ENCODE measurements at regions of chr19 and their contacts with region 1.

Region 1: GRCh38 chr19:39341719-39342604 is at the start of gene SAMD4B:
- DNase-seq: peak; percentile 99
- H3K4me3 Mint-ChIP-seq: peak within 1 kb of the TSS; percentile 96
- H3K27ac Mint-ChIP-seq: peak within 1 kb of the TSS; percentile 94
- H3K4me1 Mint-ChIP-seq: peaks cover 59% of the 10 kb centered on the region
- H3K27me3 Mint-ChIP-seq: no peaks in the 10 kb centered on the region
- total RNA-seq, gene SAMD4B: 64.0 TPM in 2 replicates

Region 2: DNA sequence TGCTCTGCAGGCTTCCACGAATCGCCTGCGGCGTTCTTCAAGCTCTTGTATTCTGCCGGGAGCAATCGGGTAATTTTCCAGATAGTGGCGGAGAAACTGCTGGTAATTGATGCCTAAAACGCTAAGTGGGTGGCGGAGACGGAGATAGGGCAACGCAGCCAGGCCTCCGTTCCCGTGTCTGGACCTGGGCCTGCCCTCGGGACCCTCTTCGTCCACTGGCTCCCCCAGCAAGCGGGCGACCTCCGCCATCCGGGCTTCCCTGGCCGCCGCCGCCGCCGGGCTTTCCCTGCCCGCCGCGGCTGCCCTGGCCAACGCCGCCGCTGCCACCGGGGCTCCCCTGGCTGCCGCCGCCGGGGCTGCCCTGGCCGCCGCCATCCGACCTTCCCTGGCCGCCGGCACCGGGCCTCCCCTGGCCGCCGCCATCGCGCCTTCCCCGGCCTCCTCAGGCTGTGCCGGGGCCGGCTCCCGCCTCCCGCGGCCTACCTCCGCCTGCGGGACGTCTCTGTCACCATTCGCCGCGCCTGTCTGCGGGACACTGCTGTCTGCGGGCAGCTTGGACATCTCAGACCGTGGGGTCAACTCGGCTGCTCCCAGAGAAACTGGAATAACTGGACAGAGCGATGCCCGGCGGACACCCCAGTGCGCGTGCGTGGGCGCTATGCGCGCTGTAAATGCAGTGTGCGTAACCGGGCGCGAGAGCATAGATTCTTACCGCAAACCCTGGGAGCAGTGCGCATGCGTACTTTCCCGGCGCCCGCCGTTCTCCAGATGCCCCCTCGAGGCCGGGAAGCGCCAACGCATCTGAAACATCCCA is 197.8 kb after region 1 on chr19 and contains the start of gene EID2:
- intact Hi-C with region 1: loop called (anchors 5 kb)
- DNase-seq: peak; percentile 93
- H3K4me3 Mint-ChIP-seq: peak within 1 kb of the TSS; percentile 94
- H3K27ac Mint-ChIP-seq: peak within 1 kb of the TSS; percentile 93
- H3K4me1 Mint-ChIP-seq: peaks cover 25% of the 10 kb centered on the region
- H3K27me3 Mint-ChIP-seq: no peaks in the 10 kb centered on the region
- total RNA-seq, gene EID2: 17.2 and 18.3 TPM in 2 replicates

Measured in activated T-helper 2 cell treated with anti-CD3 and anti-CD28 coated beads, Interferon-gamma antibody, Interleukin-2, Interleukin-4, amounts not matched to agents 10 μg/mL and 5 μg/mL and 100 μg/mL, durations not matched to agents 14 hours and 24 hours and 36 hours (primary cell).